AG04450 (cell line): ENCODE measurements at regions of chr2 and their contacts with region 1.

Region 1: GRCh38 chr2:36427790-36428243 is 72.2 kb downstream of the CRIM1 start:
- DNase-seq: no peak
- H3K4me3 ChIP-seq: no peak overlapping the region
- H3K27ac ChIP-seq: no peak overlapping the region
- H3K27me3 ChIP-seq: no peaks in the 10 kb centered on the region
- CTCF ChIP-seq: no peak

Region 2: DNA sequence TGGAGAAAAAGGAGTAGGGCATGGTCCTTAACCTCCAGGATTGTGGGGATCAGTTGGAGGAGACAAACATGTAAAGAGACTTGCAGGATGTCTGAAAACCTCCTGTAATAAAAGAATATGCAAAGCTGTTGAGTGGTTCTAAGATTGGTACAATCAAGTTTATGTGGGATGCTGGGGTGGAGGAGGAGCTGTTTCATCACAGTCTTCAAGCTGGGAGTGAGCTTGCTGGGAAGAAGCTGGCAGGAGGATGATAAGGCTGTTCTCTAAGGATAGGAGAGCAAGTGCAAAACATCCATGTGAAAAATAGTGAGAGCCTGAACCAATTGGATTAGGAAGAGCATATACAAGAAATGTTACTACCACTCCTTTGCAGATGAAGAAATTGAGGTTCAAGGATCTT is 234.1 kb before region 1 on chr2:
- CTCF ChIA-PET with region 1: no interaction called
- POLR2A ChIA-PET with region 1: no interaction called
- DNase-seq: no peak
- H3K4me3 ChIP-seq: no peak overlapping the region
- H3K27ac ChIP-seq: no peak overlapping the region
- H3K27me3 ChIP-seq: no peaks in the 10 kb centered on the region
- CTCF ChIP-seq: no peak

Region 3: DNA sequence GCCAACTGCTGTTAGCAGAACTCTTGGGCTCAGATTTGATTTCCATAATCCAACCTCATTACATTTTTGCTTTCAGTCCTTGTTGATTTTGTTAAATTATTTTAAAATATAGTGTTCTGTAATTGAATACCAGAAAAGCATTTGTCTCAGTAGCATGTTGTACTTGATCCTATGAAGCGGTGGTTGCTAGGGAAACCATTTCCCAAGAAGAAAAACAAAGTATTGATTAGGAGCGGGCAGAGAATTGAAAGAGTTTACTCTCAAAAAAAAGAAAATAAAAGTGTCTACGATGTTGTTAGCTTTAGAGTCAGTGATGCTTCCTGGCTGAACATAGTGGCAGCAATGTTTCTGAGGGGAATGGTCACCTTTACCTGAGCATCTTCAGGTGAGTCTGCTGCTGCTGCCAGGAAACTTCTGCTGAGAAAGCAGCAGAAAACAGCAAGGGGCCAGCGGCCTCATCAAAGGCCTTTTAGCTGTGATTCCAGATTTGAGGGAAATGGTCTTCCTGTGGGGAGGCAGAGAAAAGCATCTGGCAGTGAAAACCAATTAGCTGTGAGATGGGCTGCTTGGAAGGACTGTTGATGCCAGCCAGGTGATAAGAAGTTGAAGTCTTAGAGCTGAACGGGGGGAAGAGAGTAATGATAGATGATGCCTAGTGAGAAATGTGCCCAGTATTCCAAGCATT is 35.1 kb before region 1 on chr2:
- CTCF ChIA-PET with region 1: no interaction called
- POLR2A ChIA-PET with region 1: no interaction called
- DNase-seq: no peak
- H3K4me3 ChIP-seq: no peak overlapping the region
- H3K27ac ChIP-seq: no peak overlapping the region
- H3K27me3 ChIP-seq: no peaks in the 10 kb centered on the region
- CTCF ChIP-seq: no peak

Region 4: DNA sequence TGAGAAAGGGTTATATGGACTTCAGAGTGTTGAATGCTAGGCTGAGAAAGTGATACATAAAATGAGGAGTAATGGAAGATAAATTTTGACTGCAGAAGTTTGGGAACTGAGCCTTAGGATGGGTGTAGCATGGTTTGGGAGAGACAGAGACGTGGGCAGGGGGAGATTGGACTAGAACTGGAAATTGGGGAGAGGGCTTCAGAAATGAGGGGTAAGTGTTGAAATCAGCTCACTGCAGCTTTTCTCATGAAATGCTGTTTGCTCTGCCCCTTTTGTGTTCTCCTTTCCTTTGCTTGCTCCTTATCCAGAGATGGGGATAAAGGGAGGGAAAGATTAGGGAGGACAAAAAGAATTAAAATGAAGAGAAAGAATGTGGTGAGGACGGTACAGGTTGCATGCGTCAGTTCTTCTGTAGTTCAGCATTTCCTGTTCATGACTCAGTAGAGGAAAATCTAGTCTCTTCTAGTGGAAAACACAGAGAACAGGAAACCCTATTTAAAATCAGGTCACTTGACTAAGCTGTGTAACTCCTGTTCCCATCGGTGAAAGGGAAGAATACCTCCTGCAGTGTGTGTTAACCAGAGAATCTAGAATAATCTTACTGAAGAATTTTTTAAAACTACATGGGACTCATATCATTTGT is 33.3 kb after region 1 on chr2:
- CTCF ChIA-PET with region 1: no interaction called
- POLR2A ChIA-PET with region 1: interaction called, 11 read pairs
- DNase-seq: peak; percentile 80
- H3K4me3 ChIP-seq: no peak overlapping the region
- H3K27ac ChIP-seq: peak overlapping the region; percentile 91
- H3K27me3 ChIP-seq: no peaks in the 10 kb centered on the region
- CTCF ChIP-seq: no peak